HCT116 (cell line): ENCODE measurements at regions of chr19 and their contacts with region 1.

Region 1: GRCh38 chr19:34145741-34146202 is 26.5 kb upstream of the LSM14A start:
- DNase-seq: peak; percentile 33
- ATAC-seq: peak; percentile 83
- H3K4me3 ChIP-seq: no peak overlapping the region
- H3K27ac ChIP-seq: no peak overlapping the region
- H3K4me1 ChIP-seq: no peaks in the 10 kb centered on the region
- H3K27me3 ChIP-seq: no peaks in the 10 kb centered on the region
- CTCF ChIP-seq: peak; percentile 67 to 88 (median 84)
- POLR2A ChIP-seq: no peak
- RAD21 ChIP-seq: peak; percentile 80

Region 2: DNA sequence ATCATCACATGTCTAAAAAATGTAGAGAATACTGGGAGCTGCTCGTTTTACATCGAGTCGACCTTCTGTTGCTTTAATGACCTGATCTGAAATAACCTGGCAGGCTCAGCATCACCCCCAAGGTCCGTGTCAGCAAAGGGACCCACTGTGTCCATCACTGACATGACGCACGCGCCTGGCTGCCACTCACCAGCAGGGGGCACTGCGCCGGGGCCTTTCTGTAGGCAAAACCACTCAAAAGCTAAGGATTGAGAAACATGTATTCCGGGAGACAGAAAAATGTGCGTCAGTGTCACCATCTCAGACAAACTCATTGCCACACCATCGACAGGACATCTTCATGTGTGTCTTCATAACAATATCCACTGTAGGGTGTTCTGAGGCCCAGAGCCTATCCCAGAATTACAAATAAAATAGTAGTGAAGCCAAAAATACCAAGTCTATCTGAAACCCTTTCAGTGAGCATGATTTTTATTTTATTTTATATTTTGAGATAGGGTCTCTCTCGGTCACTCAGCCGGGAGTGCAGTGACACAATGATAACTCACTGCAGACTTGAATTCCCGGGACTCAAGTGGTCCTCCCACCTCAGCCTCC is 103.7 kb before region 1 on chr19:
- CTCF ChIA-PET with region 1: interaction called, 5 read pairs
- POLR2A ChIA-PET with region 1: no interaction called
- RAD21 ChIA-PET with region 1: no interaction called
- intact Hi-C with region 1: loop called (anchors 1 kb)
- DNase-seq: peak; percentile 46
- ATAC-seq: peak; percentile 98
- H3K4me3 ChIP-seq: no peak overlapping the region
- H3K27ac ChIP-seq: no peak overlapping the region
- H3K4me1 ChIP-seq: peaks cover 0 to 7% of the 10 kb centered on the region in 2 experiments; a peak in 2 of 4 replicates
- H3K27me3 ChIP-seq: no peaks in the 10 kb centered on the region
- CTCF ChIP-seq: peak; percentile 77 to 99 (median 99)
- POLR2A ChIP-seq: no peak
- RAD21 ChIP-seq: peak; percentile 63

Region 3: DNA sequence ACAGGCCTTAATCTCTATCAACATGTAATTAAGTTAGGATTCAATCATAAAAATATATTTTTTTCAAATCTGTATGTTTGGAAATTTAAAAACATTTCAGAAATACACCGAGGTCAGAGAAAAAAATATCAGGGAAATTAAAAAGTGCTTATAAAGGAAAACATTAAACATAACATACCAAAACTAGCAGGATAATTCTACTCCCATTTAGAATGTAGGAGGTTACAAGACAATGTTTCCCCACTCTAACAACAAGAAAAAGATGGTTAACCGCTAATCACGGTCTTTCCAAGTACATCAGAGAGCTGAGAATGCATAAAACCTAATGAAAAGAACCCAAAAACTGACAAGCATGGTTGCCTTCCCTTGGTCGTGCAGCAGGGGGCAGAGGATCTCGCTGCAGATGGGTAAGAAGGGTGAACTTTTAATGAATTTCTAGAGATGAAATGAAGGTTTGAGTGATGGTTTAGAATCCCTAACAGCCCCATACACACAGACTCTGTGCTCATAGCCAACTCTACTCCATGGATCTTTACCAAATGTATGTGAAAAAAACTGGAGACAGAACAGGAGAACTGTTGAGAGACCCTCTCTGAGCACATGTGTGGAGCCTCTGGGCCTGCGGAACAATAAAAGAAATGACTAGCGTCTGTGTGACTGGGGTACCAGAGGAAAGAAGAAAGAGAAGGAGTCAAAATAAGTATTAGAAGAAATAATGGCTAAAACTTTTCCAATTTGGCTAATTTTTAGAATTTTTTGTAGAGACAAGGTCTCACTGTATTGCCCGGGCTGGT is 24.7 kb before region 1 on chr19:
- CTCF ChIA-PET with region 1: interaction called, 10 read pairs
- POLR2A ChIA-PET with region 1: no interaction called
- RAD21 ChIA-PET with region 1: no interaction called
- intact Hi-C with region 1: loop called (anchors 1 kb)
- DNase-seq: peak; percentile 43
- ATAC-seq: peak; percentile 78
- H3K4me3 ChIP-seq: no peak overlapping the region
- H3K27ac ChIP-seq: no peak overlapping the region
- H3K4me1 ChIP-seq: no peaks in the 10 kb centered on the region
- H3K27me3 ChIP-seq: no peaks in the 10 kb centered on the region
- CTCF ChIP-seq: peak; percentile 71 to 83 (median 77)
- POLR2A ChIP-seq: no peak
- RAD21 ChIP-seq: peak; percentile 61

Region 4: GRCh38 chr19:34461375-34462100 is 315.8 kb after region 1 on chr19:
- CTCF ChIA-PET with region 1: no interaction called
- POLR2A ChIA-PET with region 1: no interaction called
- RAD21 ChIA-PET with region 1: no interaction called
- intact Hi-C with region 1: no loop called
- DNase-seq: no peak
- ATAC-seq: no peak
- H3K4me3 ChIP-seq: no peak overlapping the region
- H3K27ac ChIP-seq: no peak overlapping the region
- H3K4me1 ChIP-seq: no peaks in the 10 kb centered on the region
- H3K27me3 ChIP-seq: no peaks in the 10 kb centered on the region
- CTCF ChIP-seq: no peak
- POLR2A ChIP-seq: no peak
- RAD21 ChIP-seq: no peak